B cell (primary cell): ENCODE measurements at regions of chr13 and their contacts with region 1.

Region 1: GRCh38 chr13:21670883-21671619 is at the start of gene FGF9:
- DNase-seq: peak; percentile 89
- ATAC-seq: peak; percentile 73
- H3K4me3 ChIP-seq: peak within 1 kb of the TSS; percentile 63 to 89 (median 75)
- H3K4me3 Mint-ChIP-seq: peak within 1 kb of the TSS; percentile 92
- H3K27ac ChIP-seq: no peak within 1 kb of the TSS
- H3K27ac Mint-ChIP-seq: peak within 1 kb of the TSS; percentile 79
- H3K4me1 ChIP-seq: peaks cover 48 to 60% of the 10 kb centered on the region in 2 donors
- H3K4me1 Mint-ChIP-seq: peaks cover 50% of the 10 kb centered on the region
- H3K27me3 ChIP-seq: peaks cover 0 to 66% (median 42%) of the 10 kb centered on the region in 4 experiments
- H3K27me3 Mint-ChIP-seq: peaks cover 49% of the 10 kb centered on the region
- CTCF ChIP-seq: no peak
- total RNA-seq, gene FGF9: 2.5 and 3.0 TPM in 2 replicates

Region 2: GRCh38 chr13:21137696-21138095 is 533.4 kb before region 1 on chr13:
- CTCF ChIA-PET with region 1: no interaction called
- POLR2A ChIA-PET with region 1: no interaction called
- intact Hi-C with region 1: loop called (anchors 2 kb)
- DNase-seq: no peak
- ATAC-seq: no peak
- H3K4me3 ChIP-seq: no peak overlapping the region
- H3K4me3 Mint-ChIP-seq: no peak overlapping the region
- H3K27ac ChIP-seq: no peak overlapping the region
- H3K27ac Mint-ChIP-seq: no peak overlapping the region
- H3K4me1 ChIP-seq: peaks cover 18 to 22% of the 10 kb centered on the region in 2 donors
- H3K4me1 Mint-ChIP-seq: peaks cover 24% of the 10 kb centered on the region
- H3K27me3 ChIP-seq: peaks cover 0 to 4% (median 2%) of the 10 kb centered on the region in 4 experiments
- H3K27me3 Mint-ChIP-seq: peaks cover 17% of the 10 kb centered on the region
- CTCF ChIP-seq: no peak

Region 3: GRCh38 chr13:21458813-21459701 is 212.0 kb before region 1 on chr13 and contains the start of gene ZDHHC20:
- CTCF ChIA-PET with region 1: no interaction called
- POLR2A ChIA-PET with region 1: no interaction called
- intact Hi-C with region 1: loop called (anchors 5 kb)
- DNase-seq: peak; percentile 91
- ATAC-seq: peak; percentile 93
- H3K4me3 ChIP-seq: peak within 1 kb of the TSS; percentile 51 to 94 (median 85)
- H3K4me3 Mint-ChIP-seq: peak within 1 kb of the TSS; percentile 93
- H3K27ac ChIP-seq: peak within 1 kb of the TSS; percentile 64 to 86
- H3K27ac Mint-ChIP-seq: peak within 1 kb of the TSS; percentile 96
- H3K4me1 ChIP-seq: peaks cover 13 to 17% of the 10 kb centered on the region in 2 donors
- H3K4me1 Mint-ChIP-seq: peaks cover 34% of the 10 kb centered on the region
- H3K27me3 ChIP-seq: no peaks in the 10 kb centered on the region
- H3K27me3 Mint-ChIP-seq: no peaks in the 10 kb centered on the region
- CTCF ChIP-seq: no peak
- total RNA-seq, gene ZDHHC20: 57.7 and 61.5 TPM in 2 replicates

Region 4: GRCh38 chr13:21584973-21585592 is 86.0 kb before region 1 on chr13:
- CTCF ChIA-PET with region 1: no interaction called
- POLR2A ChIA-PET with region 1: no interaction called
- intact Hi-C with region 1: no loop called
- DNase-seq: no peak
- ATAC-seq: no peak
- H3K4me3 ChIP-seq: no peak overlapping the region
- H3K4me3 Mint-ChIP-seq: no peak overlapping the region
- H3K27ac ChIP-seq: no peak overlapping the region
- H3K27ac Mint-ChIP-seq: no peak overlapping the region
- H3K4me1 ChIP-seq: peaks cover 13 to 17% of the 10 kb centered on the region in 2 donors
- H3K4me1 Mint-ChIP-seq: peaks cover 47% of the 10 kb centered on the region
- H3K27me3 ChIP-seq: no peaks in the 10 kb centered on the region
- H3K27me3 Mint-ChIP-seq: no peaks in the 10 kb centered on the region
- CTCF ChIP-seq: no peak

Region 5: GRCh38 chr13:21638319-21639282 is 32.5 kb before region 1 on chr13:
- CTCF ChIA-PET with region 1: interaction called, 23 read pairs
- POLR2A ChIA-PET with region 1: no interaction called
- intact Hi-C with region 1: loop called (anchors 2 kb)
- DNase-seq: peak; percentile 57
- ATAC-seq: no peak
- H3K4me3 ChIP-seq: no peak overlapping the region
- H3K4me3 Mint-ChIP-seq: no peak overlapping the region
- H3K27ac ChIP-seq: no peak overlapping the region
- H3K27ac Mint-ChIP-seq: no peak overlapping the region
- H3K4me1 ChIP-seq: no peaks in the 10 kb centered on the region
- H3K4me1 Mint-ChIP-seq: peaks cover 2% of the 10 kb centered on the region
- H3K27me3 ChIP-seq: peaks cover 0 to 8% (median 0%) of the 10 kb centered on the region in 4 experiments
- H3K27me3 Mint-ChIP-seq: peaks cover 6% of the 10 kb centered on the region
- CTCF ChIP-seq: peak; percentile 90

Region 6: GRCh38 chr13:21657538-21657937 is 13.5 kb before region 1 on chr13:
- CTCF ChIA-PET with region 1: no interaction called
- POLR2A ChIA-PET with region 1: no interaction called
- intact Hi-C with region 1: no loop called
- DNase-seq: no peak
- ATAC-seq: no peak
- H3K4me3 ChIP-seq: no peak overlapping the region
- H3K4me3 Mint-ChIP-seq: no peak overlapping the region
- H3K27ac ChIP-seq: no peak overlapping the region
- H3K27ac Mint-ChIP-seq: no peak overlapping the region
- H3K4me1 ChIP-seq: no peaks in the 10 kb centered on the region
- H3K4me1 Mint-ChIP-seq: no peaks in the 10 kb centered on the region
- H3K27me3 ChIP-seq: peaks cover 0 to 18% (median 10%) of the 10 kb centered on the region in 4 experiments
- H3K27me3 Mint-ChIP-seq: peaks cover 38% of the 10 kb centered on the region
- CTCF ChIP-seq: no peak

Region 7: GRCh38 chr13:21717817-21718216 is 46.8 kb after region 1 on chr13:
- CTCF ChIA-PET with region 1: no interaction called
- POLR2A ChIA-PET with region 1: no interaction called
- intact Hi-C with region 1: no loop called
- DNase-seq: no peak
- ATAC-seq: no peak
- H3K4me3 ChIP-seq: no peak overlapping the region
- H3K4me3 Mint-ChIP-seq: no peak overlapping the region
- H3K27ac ChIP-seq: no peak overlapping the region
- H3K27ac Mint-ChIP-seq: no peak overlapping the region
- H3K4me1 ChIP-seq: no peaks in the 10 kb centered on the region
- H3K4me1 Mint-ChIP-seq: no peaks in the 10 kb centered on the region
- H3K27me3 ChIP-seq: peaks cover 0 to 5% (median under 1%) of the 10 kb centered on the region in 4 experiments
- H3K27me3 Mint-ChIP-seq: peaks cover 20% of the 10 kb centered on the region
- CTCF ChIP-seq: no peak

Region 8: GRCh38 chr13:22061351-22061805 is 390.3 kb after region 1 on chr13:
- CTCF ChIA-PET with region 1: no interaction called
- POLR2A ChIA-PET with region 1: no interaction called
- intact Hi-C with region 1: loop called (anchors 5 kb)
- DNase-seq: no peak
- ATAC-seq: peak; percentile 42
- H3K4me3 ChIP-seq: peak overlapping the region in 2 of 5 experiments; percentile 25 to 34
- H3K4me3 Mint-ChIP-seq: peak overlapping the region; percentile 58
- H3K27ac ChIP-seq: peak overlapping the region; percentile 69 to 81
- H3K27ac Mint-ChIP-seq: peak overlapping the region; percentile 89
- H3K4me1 ChIP-seq: peaks cover 35% of the 10 kb centered on the region in 2 donors
- H3K4me1 Mint-ChIP-seq: peaks cover 49% of the 10 kb centered on the region
- H3K27me3 ChIP-seq: no peaks in the 10 kb centered on the region
- H3K27me3 Mint-ChIP-seq: no peaks in the 10 kb centered on the region
- CTCF ChIP-seq: no peak

Region 9: GRCh38 chr13:22187329-22187728 is 516.3 kb after region 1 on chr13:
- CTCF ChIA-PET with region 1: no interaction called
- POLR2A ChIA-PET with region 1: no interaction called
- intact Hi-C with region 1: loop called (anchors 10 kb)
- DNase-seq: no peak
- ATAC-seq: no peak
- H3K4me3 ChIP-seq: no peak overlapping the region
- H3K4me3 Mint-ChIP-seq: no peak overlapping the region
- H3K27ac ChIP-seq: no peak overlapping the region
- H3K27ac Mint-ChIP-seq: no peak overlapping the region
- H3K4me1 ChIP-seq: no peaks in the 10 kb centered on the region
- H3K4me1 Mint-ChIP-seq: peaks cover 4% of the 10 kb centered on the region
- H3K27me3 ChIP-seq: no peaks in the 10 kb centered on the region
- H3K27me3 Mint-ChIP-seq: no peaks in the 10 kb centered on the region
- CTCF ChIP-seq: no peak

Region 10: DNA sequence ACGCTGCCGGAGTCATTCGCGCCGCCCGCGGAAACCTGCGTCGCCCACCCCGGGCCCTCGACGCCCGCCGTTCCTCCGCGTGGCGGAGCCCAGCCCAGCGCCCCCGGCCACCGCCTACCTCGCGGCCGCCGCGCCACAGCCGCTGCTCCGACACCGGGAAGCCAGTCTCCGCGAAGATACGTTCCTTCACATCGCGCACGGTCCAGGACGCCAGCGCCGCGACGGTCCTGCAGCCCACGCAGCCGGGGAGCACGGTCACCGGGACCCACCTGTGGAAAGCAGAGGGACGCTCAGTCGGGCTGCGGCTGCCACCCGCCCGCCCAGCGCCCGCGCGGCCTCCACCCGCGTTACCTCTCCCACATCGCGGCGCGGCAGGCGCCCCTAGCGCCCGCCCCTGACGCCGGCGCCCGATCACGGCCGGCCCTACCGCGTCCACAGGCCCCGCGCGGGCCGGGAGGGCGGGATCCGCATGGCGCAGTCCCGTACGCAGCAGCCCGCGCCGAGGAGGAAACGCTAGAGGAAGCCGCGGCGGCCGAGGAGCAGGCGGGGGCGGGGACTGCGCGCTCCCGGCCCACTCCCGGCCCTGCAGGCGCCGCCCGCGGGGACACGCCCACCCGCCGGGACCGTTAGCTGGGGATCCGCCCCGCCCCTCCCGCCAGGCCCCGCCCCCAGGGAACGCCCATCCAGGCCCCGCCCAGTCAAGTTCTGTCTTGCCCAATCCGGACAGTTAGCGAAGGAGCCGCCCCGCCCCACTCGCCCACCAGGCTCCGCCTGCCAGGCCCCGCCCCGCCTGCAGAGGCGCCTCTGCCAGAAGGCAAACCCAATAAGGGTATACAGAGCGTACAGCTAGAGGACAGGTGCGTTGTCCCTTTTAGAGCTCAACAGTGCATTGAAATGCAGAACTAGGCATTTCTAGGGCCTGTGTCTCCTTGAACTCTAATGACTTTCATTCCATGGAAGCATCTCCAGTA is 1704.2 kb after region 1 on chr13:
- CTCF ChIA-PET with region 1: no interaction called
- POLR2A ChIA-PET with region 1: no interaction called
- intact Hi-C with region 1: loop called (anchors 2 kb)
- DNase-seq: peak; percentile 96
- ATAC-seq: peak; percentile 85
- H3K4me3 ChIP-seq: peak overlapping the region in 4 of 5 experiments; percentile 46 to 69 (median 67)
- H3K4me3 Mint-ChIP-seq: peak overlapping the region; percentile 79
- H3K27ac ChIP-seq: peak overlapping the region; percentile 49 to 51
- H3K27ac Mint-ChIP-seq: peak overlapping the region; percentile 86
- H3K4me1 ChIP-seq: peaks cover 56 to 59% of the 10 kb centered on the region in 2 donors
- H3K4me1 Mint-ChIP-seq: peaks cover 64% of the 10 kb centered on the region
- H3K27me3 ChIP-seq: no peaks in the 10 kb centered on the region
- H3K27me3 Mint-ChIP-seq: no peaks in the 10 kb centered on the region
- CTCF ChIP-seq: peak; percentile 59